Dorsolateral prefrontal cortex (tissue), 120 donors: ENCODE measurements at regions of chr10 and their contacts with region 1.

Region 1: GRCh38 chr10:92240289-92241157 is 50.4 kb downstream of the CPEB3 start:
- DNase-seq: peak in 9 of 10 donors; percentile 53 to 80 (median 60)
- H3K4me3 ChIP-seq: peak overlapping the region; percentile 60 to 94 (median 81)
- H3K27ac ChIP-seq: peak overlapping the region; percentile 87 to 99 (median 97)
- H3K27me3 ChIP-seq: no peaks in the 10 kb centered on the region
- CTCF ChIP-seq: peak in 5 of 56 donors; percentile 0 to 27 (median 13)

Region 2: DNA sequence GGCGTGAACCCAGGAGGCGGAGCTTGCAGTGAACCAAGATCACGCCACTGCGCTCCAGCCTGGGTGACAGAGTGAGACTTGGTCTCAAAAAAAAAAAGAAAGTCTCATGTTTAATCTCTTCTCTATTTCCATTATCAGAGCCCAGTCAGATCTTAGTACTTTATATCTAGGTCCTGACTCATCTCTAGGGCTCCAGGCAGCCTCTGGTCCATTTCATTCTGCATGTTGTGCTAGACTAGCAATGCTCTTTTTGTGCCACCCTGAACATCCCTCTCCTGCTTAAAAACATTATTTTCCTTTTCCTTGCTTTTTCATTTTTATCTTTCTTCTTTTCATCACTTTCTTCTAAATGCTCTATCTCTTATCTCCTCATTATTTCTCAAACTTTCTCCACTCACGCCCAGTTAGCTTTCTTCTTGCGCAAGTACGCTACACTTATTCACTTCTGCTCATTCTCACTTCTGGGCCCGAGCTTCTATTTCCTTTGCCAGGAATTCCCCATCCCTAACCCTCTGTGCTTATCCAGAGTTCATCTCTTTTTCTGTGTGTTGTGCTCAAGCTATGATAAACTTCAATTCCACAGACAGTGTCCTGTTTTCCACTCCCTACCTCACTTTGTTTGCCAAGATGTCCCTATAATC is 253.0 kb before region 1 on chr10:
- intact Hi-C with region 1: no loop called
- DNase-seq: no peak
- H3K4me3 ChIP-seq: no peak overlapping the region
- H3K27ac ChIP-seq: no peak overlapping the region
- H3K27me3 ChIP-seq: no peaks in the 10 kb centered on the region
- CTCF ChIP-seq: no peak

Region 3: GRCh38 chr10:92087750-92088395 is 152.7 kb before region 1 on chr10:
- intact Hi-C with region 1: loop called (anchors 5 to 10 kb)
- DNase-seq: peak in 8 of 10 donors; percentile 47 to 84 (median 56)
- H3K4me3 ChIP-seq: no peak overlapping the region
- H3K27ac ChIP-seq: peak overlapping the region in 21 of 59 donors; percentile 0 to 48 (median 24)
- H3K27me3 ChIP-seq: no peaks in the 10 kb centered on the region
- CTCF ChIP-seq: peak; percentile 9 to 91 (median 76)

Region 4: DNA sequence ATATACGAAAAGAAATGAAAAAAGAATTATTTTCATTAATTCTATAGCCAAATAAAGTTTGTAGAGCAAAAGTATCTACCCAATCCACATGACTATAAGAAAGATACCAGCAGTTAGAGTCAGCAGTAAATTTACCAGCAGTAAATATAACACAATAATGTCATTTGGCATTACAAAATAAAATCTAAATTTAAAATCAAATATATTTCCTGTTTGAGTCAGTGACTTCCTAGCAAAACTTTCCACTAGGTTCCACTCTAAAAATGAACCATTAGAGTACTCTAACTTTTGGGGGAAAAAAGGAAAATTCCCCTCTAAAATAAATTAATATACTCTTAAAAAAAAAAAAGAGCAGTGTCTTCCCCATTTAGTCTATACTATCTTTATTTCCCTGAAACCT is 94.4 kb before region 1 on chr10:
- intact Hi-C with region 1: loop called in 1 of 2 experiments (anchors 5 kb)
- DNase-seq: no peak
- H3K4me3 ChIP-seq: no peak overlapping the region
- H3K27ac ChIP-seq: peak overlapping the region in 40 of 59 donors; percentile 2 to 68 (median 39)
- H3K27me3 ChIP-seq: no peaks in the 10 kb centered on the region
- CTCF ChIP-seq: no peak

Region 5: DNA sequence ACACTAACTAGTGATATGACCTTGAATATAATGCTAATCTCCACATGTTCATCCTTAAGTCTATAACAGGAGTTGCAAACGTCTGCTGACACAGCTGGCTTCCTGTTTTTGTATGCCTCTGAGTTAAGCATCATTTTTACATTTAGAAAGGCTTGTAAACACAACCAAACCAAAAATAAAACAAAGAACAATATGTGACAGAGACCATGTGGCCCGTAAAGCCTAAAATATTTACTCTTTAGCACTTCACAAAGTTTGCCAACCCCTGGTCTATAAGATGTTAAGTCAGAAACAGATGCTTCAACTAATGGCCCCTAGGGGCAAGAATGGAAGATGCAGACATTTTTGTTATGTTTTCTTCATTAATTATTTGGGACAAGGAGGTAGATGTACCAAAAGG is 58.9 kb before region 1 on chr10:
- intact Hi-C with region 1: no loop called
- DNase-seq: no peak
- H3K4me3 ChIP-seq: no peak overlapping the region
- H3K27ac ChIP-seq: no peak overlapping the region
- H3K27me3 ChIP-seq: no peaks in the 10 kb centered on the region
- CTCF ChIP-seq: peak in 10 of 56 donors; percentile 11 to 31 (median 18)